ENCODE measurements at regions of chr2 and their contacts with region 1.

Region 1: DNA sequence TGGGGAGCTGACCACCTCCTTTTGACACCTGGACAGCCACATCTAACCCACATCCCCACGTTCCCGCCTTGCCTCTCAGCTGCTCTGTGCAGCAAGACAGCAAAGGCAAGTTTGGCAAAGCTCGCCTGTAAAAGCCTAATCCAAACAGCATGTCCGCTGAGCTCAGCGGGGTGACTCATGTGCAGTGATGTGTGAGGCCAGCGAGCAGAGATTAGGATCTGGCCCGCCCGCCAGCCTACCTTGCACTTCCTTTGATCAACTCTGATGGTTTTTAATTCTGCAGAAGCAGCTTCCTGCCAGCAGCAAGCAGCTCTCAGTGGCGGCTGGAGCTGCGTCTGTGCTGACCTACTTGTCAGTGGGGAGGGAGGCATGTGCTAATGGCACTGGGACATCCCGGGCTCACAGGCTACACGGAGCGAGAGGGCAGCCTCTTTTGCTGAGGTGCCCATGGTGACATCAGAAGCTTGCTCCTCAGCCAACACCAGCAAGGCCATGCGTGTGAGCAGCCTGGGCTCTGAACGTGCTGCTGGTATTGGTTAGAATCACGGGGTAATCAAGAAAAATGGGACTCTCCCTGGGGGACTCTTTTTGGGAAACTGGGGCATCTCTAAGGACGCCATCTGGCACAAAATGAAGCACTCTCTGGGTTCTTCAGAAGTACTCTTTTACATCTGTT is 36.0 kb upstream of the EML4 start:
- DNase-seq: peak; percentile 87 to 88
- H3K4me3 ChIP-seq: peak overlapping the region; percentile 1; the same call in 1 of the 2 replicates
- H3K4me3 Mint-ChIP-seq: peak overlapping the region; percentile 59
- H3K27ac Mint-ChIP-seq: peak overlapping the region; percentile 84
- H3K4me1 ChIP-seq: peaks cover 56% of the 10 kb centered on the region
- H3K4me1 Mint-ChIP-seq: peaks cover 53% of the 10 kb centered on the region
- H3K27me3 ChIP-seq: no peaks in the 10 kb centered on the region
- H3K27me3 Mint-ChIP-seq: no peaks in the 10 kb centered on the region
- CTCF ChIP-seq: no peak

Region 2: DNA sequence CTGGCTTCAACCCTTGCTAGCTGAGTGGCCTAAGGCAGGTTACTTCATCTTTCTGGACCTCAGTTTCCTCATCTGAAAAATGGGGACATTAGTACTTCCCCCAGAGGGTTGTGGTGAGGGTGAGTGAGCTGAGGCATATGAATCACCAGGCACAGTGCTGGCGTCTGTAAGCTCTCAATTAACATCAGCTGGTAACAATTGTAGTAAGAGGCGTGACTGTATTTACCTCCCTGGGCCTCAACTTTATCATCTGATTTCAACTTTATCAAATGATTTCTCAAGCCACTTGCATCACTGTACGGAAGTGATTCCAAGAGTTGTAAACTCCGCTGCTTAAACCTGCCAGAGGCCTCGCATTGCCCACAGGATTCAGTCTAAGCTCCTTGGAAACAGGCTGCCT is 138.9 kb before region 1 on chr2:
- CTCF ChIA-PET with region 1: no interaction called
- POLR2A ChIA-PET with region 1: no interaction called
- intact Hi-C with region 1: no loop called
- DNase-seq: no peak
- H3K4me3 ChIP-seq: no peak overlapping the region
- H3K4me3 Mint-ChIP-seq: no peak overlapping the region
- H3K27ac Mint-ChIP-seq: no peak overlapping the region
- H3K4me1 ChIP-seq: peaks cover 20% of the 10 kb centered on the region
- H3K4me1 Mint-ChIP-seq: peaks cover 27% of the 10 kb centered on the region
- H3K27me3 ChIP-seq: no peaks in the 10 kb centered on the region
- H3K27me3 Mint-ChIP-seq: no peaks in the 10 kb centered on the region
- CTCF ChIP-seq: no peak

Region 3: GRCh38 chr2:42102024-42102590 is 31.0 kb before region 1 on chr2:
- CTCF ChIA-PET with region 1: interaction called, 3 read pairs
- POLR2A ChIA-PET with region 1: no interaction called
- intact Hi-C with region 1: loop called (anchors 1 kb)
- DNase-seq: peak; percentile 72 to 78
- H3K4me3 ChIP-seq: peak overlapping the region; percentile 29
- H3K4me3 Mint-ChIP-seq: peak overlapping the region; percentile 84
- H3K27ac Mint-ChIP-seq: peak overlapping the region; percentile 96
- H3K4me1 ChIP-seq: peaks cover 49% of the 10 kb centered on the region
- H3K4me1 Mint-ChIP-seq: peaks cover 13% of the 10 kb centered on the region
- H3K27me3 ChIP-seq: no peaks in the 10 kb centered on the region
- H3K27me3 Mint-ChIP-seq: no peaks in the 10 kb centered on the region
- CTCF ChIP-seq: no peak

Region 4: GRCh38 chr2:42112418-42112817 is 20.7 kb before region 1 on chr2:
- CTCF ChIA-PET with region 1: no interaction called
- POLR2A ChIA-PET with region 1: no interaction called
- intact Hi-C with region 1: no loop called
- DNase-seq: no peak
- H3K4me3 ChIP-seq: no peak overlapping the region
- H3K4me3 Mint-ChIP-seq: no peak overlapping the region
- H3K27ac Mint-ChIP-seq: no peak overlapping the region
- H3K4me1 ChIP-seq: peaks cover 23% of the 10 kb centered on the region
- H3K4me1 Mint-ChIP-seq: peaks cover 6% of the 10 kb centered on the region
- H3K27me3 ChIP-seq: no peaks in the 10 kb centered on the region
- H3K27me3 Mint-ChIP-seq: no peaks in the 10 kb centered on the region
- CTCF ChIP-seq: no peak

Region 5: DNA sequence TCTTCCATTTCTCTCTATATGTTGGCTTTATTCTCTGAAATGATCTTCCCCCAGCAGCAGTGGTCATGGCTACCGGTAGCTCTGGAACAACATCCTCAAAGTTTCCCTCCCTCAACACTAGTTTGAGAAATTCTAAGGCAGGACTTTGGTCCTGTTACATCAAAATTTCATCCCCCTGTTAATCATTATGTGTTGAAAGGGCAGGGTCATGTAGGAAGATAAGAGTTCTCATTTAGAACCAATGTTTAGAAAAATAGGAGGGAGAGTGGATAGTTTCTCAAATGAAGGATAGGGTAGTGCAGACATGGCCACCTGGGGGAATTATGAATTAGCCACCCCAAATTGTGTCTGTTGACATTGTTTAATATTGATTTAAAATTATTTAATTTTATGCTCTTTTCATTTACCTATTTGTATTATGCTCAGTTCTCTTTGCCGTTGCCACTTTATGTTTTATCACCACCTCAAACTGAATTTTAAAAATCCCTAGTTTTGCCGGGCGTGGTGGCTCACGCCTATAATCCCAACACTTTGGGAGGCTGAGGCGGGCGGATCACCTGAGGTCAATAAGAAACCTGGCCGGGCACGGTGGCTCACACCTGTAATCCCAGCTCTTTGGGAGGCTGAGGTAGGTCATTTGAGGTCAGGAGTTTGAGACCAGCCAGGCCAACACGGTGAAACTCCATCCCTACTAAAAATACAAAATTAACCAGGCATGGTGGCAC is 58.3 kb after region 1 on chr2:
- CTCF ChIA-PET with region 1: interaction called, 8 read pairs
- POLR2A ChIA-PET with region 1: interaction called, 4 read pairs
- intact Hi-C with region 1: loop called (anchors 2 kb)
- DNase-seq: peak; percentile 47 to 82
- H3K4me3 ChIP-seq: no peak overlapping the region
- H3K4me3 Mint-ChIP-seq: peak overlapping the region; percentile 65
- H3K27ac Mint-ChIP-seq: peak overlapping the region; percentile 77
- H3K4me1 ChIP-seq: peaks cover 84% of the 10 kb centered on the region
- H3K4me1 Mint-ChIP-seq: peaks cover 52% of the 10 kb centered on the region
- H3K27me3 ChIP-seq: no peaks in the 10 kb centered on the region
- H3K27me3 Mint-ChIP-seq: no peaks in the 10 kb centered on the region
- CTCF ChIP-seq: no peak

Region 6: DNA sequence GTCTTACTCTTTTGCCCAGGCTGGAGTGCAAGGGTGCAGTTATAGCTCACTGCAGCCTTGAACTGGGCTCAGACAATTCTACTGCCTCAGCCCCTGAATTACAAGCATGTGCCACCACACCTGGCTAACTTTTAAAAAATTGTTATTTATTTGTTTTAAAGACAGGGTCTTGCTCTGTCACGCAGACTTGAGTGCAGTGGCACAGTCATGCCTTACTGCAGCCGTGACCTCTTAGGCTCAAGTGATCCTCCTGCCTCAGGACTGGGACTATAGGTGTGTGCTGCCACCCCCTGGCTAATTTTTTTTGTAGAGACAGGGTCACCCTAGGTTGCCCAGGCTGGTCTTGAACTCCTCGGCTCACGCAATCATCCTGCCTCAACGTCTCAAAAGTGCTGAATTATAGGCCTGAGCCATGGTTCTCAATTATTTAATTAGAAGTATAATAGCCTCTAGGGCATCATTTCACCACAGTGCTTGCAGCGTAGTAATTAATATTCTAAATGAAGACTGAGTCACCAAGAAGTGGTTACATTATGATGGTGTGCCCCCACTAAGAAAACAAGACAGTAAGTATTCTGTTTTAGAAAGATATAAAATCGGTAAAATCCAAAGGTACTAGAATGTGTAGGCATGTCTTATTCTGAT is 105.7 kb after region 1 on chr2:
- CTCF ChIA-PET with region 1: no interaction called
- POLR2A ChIA-PET with region 1: no interaction called
- intact Hi-C with region 1: loop called (anchors 2 kb)
- DNase-seq: peak; percentile 75 to 78
- H3K4me3 ChIP-seq: no peak overlapping the region
- H3K4me3 Mint-ChIP-seq: no peak overlapping the region
- H3K27ac Mint-ChIP-seq: no peak overlapping the region
- H3K4me1 ChIP-seq: peaks cover 33% of the 10 kb centered on the region
- H3K4me1 Mint-ChIP-seq: peaks cover 49% of the 10 kb centered on the region
- H3K27me3 ChIP-seq: no peaks in the 10 kb centered on the region
- H3K27me3 Mint-ChIP-seq: no peaks in the 10 kb centered on the region
- CTCF ChIP-seq: peak; percentile 51 to 55